Endothelial cell of umbilical vein (primary cell): ENCODE measurements at regions of chr6 and their contacts with region 1.

Region 1: GRCh38 chr6:90216072-90216977 is 80.3 kb downstream of the BACH2 start:
- DNase-seq: peak; percentile 60
- H3K4me3 ChIP-seq: no peak overlapping the region
- H3K27ac ChIP-seq: peak overlapping the region; percentile 10
- H3K4me1 ChIP-seq: peaks cover 48% of the 10 kb centered on the region
- H3K27me3 ChIP-seq: no peaks in the 10 kb centered on the region
- CTCF ChIP-seq: no peak
- POLR2A ChIP-seq: no peak

Region 2: GRCh38 chr6:90008908-90009501 is 207.3 kb before region 1 on chr6:
- CTCF ChIA-PET with region 1: interaction called, 4 read pairs
- POLR2A ChIA-PET with region 1: no interaction called
- dilution Hi-C with region 1: no loop called
- intact Hi-C with region 1: loop called (anchors 1 kb)
- DNase-seq: peak; percentile 86
- H3K4me3 ChIP-seq: peak overlapping the region in 1 of 3 experiments; percentile 9
- H3K27ac ChIP-seq: peak overlapping the region; percentile 85
- H3K4me1 ChIP-seq: peaks cover 16% of the 10 kb centered on the region
- H3K27me3 ChIP-seq: no peaks in the 10 kb centered on the region
- CTCF ChIP-seq: no peak
- POLR2A ChIP-seq: no peak

Region 3: GRCh38 chr6:90256698-90257485 is 40.6 kb after region 1 on chr6:
- CTCF ChIA-PET with region 1: no interaction called
- POLR2A ChIA-PET with region 1: no interaction called
- dilution Hi-C with region 1: no loop called
- intact Hi-C with region 1: loop called (anchors 2 kb)
- DNase-seq: peak; percentile 85
- H3K4me3 ChIP-seq: no peak overlapping the region
- H3K27ac ChIP-seq: peak overlapping the region; percentile 60
- H3K4me1 ChIP-seq: peaks cover 9% of the 10 kb centered on the region
- H3K27me3 ChIP-seq: no peaks in the 10 kb centered on the region
- CTCF ChIP-seq: no peak
- POLR2A ChIP-seq: no peak

Region 4: DNA sequence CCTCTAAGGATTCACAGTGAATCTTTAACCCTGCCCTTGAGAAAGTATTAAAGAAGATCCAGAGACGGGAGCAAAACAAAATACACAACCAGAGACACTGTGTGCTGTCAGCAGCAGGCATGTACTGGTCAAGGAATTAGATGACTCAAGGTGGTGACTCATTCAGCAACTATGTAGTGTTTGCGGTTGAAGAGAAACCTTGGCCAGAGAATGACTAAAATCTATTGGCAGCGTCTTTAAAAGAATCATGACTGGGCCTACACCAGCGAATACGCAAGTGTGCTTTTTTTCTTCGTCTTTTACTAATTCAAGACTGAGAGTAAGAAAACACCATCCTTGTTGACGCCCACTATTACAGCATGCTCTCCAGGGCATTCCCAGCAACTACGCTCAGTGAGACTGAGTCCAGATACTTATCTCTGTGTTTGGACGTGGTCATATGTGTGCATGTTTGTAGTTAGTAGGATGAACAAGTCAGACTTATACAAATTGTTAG is 152.7 kb after region 1 on chr6:
- CTCF ChIA-PET with region 1: interaction called, 5 read pairs
- POLR2A ChIA-PET with region 1: interaction called, 5 read pairs
- dilution Hi-C with region 1: no loop called
- intact Hi-C with region 1: loop called (anchors 1 kb)
- DNase-seq: peak; percentile 98
- H3K4me3 ChIP-seq: peak overlapping the region in 1 of 3 experiments; percentile 12
- H3K27ac ChIP-seq: peak overlapping the region; percentile 78
- H3K4me1 ChIP-seq: peaks cover 16% of the 10 kb centered on the region
- H3K27me3 ChIP-seq: no peaks in the 10 kb centered on the region
- CTCF ChIP-seq: no peak
- POLR2A ChIP-seq: no peak

Region 5: DNA sequence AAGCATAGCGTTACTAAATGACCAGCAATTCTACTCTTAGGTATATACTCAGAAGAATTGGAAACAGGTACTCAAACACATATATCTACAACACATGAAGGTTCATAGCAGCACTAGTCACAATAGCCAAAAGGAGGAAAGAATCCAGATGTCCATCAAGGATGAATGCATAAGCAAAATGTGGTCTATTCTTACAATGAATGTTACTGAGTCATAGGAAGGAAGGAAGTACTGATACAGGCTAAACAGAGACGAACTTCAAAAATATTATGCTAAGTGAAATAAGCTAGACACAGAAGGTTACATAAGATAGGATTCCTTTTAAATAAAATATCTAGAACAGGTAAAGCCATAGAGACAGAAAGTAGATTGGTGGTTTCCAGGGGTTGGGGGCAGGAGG is 277.0 kb after region 1 on chr6:
- CTCF ChIA-PET with region 1: no interaction called
- POLR2A ChIA-PET with region 1: interaction called, 3 read pairs
- dilution Hi-C with region 1: no loop called
- intact Hi-C with region 1: loop called (anchors 2 kb)
- DNase-seq: peak; percentile 91
- H3K4me3 ChIP-seq: no peak overlapping the region
- H3K27ac ChIP-seq: peak overlapping the region; percentile 66
- H3K4me1 ChIP-seq: peaks cover 36% of the 10 kb centered on the region
- H3K27me3 ChIP-seq: no peaks in the 10 kb centered on the region
- CTCF ChIP-seq: no peak
- POLR2A ChIP-seq: peak; percentile 46